ENCODE measurements at regions of chrX and their contacts with region 1.

Region 1: GRCh38 chrX:9163214-9163681 is 129.3 kb upstream of the FAM9B start:
- DNase-seq: no peak
- H3K4me3 Mint-ChIP-seq: peak overlapping the region; percentile 8
- H3K27ac Mint-ChIP-seq: peak overlapping the region; percentile 81
- H3K4me1 Mint-ChIP-seq: peaks cover 55% of the 10 kb centered on the region
- H3K27me3 Mint-ChIP-seq: no peaks in the 10 kb centered on the region

Region 2: DNA sequence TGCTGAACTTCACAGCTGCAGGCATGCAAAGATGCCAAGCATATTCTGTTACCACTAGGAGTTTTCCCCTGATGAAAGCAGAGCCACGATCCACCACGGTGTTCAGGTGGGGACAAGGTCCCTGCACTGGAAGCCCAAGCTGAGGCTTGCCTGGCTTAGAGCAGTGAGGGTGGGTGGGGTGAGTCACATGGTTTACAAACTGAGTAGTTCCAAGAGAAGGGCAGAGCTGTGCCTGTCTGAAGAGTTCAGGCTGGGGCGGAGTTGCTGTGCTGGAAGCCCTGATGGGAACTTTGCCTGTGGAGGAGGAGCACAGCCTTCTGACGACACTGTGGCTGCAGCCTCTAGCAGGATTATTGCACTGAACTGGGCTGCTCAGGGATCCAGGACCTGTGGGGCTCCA is 174.8 kb before region 1 on chrX:
- intact Hi-C with region 1: loop called (anchors 10 kb)
- DNase-seq: no peak
- H3K4me3 Mint-ChIP-seq: no peak overlapping the region
- H3K27ac Mint-ChIP-seq: no peak overlapping the region
- H3K4me1 Mint-ChIP-seq: peaks cover 5% of the 10 kb centered on the region
- H3K27me3 Mint-ChIP-seq: no peaks in the 10 kb centered on the region

Region 3: DNA sequence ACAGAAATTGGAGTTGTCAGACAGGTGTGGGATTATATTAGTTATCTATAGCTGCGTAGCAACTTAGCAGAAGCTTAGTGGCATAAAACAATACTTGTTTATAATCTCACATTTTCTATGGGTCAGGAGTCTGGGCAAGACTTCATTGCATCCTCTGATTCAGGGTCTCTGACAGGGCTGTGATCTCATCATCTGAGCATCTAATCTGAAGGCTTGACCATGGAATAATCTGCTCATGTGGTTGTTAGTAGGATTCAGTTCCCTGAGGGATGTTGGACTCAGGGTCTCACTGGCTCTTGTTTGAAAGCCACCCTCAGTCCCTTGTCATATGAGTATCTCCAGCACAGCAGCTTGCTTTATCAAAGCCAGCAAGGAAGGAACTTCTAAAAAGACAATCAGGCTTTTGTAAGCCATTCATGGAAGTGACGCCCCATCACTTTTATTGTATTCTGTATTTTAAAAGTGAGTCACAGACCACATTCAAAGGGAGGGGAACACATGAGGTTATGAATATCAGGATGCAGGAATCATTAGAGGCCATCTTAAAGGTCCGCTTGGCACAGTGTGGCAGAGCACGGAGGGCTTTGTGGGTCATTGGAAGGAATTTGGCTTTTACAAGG is 92.1 kb before region 1 on chrX:
- intact Hi-C with region 1: no loop called
- DNase-seq: no peak
- H3K4me3 Mint-ChIP-seq: no peak overlapping the region
- H3K27ac Mint-ChIP-seq: no peak overlapping the region
- H3K4me1 Mint-ChIP-seq: peaks cover 10% of the 10 kb centered on the region
- H3K27me3 Mint-ChIP-seq: peaks cover 10% of the 10 kb centered on the region

Region 4: DNA sequence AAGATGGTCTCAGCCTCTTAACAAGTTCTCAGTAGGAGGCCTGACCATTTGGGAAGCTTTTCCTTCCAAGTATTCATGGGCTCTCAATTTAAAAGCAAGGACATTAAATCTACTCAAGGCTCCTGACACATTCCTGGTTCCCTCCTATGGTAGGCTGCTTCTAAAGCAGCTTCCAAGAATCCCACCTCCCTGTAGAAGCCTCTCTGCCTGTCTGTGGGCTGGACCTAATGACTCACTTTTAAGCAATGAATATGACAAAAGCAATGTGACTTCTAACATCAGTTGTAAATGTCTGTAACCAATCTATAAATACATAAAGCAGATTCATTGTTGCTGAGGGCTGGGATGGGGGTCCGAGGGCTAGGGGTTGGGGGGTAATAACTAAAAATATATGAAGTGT is 29.8 kb before region 1 on chrX:
- intact Hi-C with region 1: loop called (anchors 5 kb)
- DNase-seq: no peak
- H3K4me3 Mint-ChIP-seq: no peak overlapping the region
- H3K27ac Mint-ChIP-seq: no peak overlapping the region
- H3K4me1 Mint-ChIP-seq: peaks cover 12% of the 10 kb centered on the region
- H3K27me3 Mint-ChIP-seq: no peaks in the 10 kb centered on the region

Region 5: GRCh38 chrX:9258421-9259104 is 95.3 kb after region 1 on chrX:
- intact Hi-C with region 1: loop called (anchors 10 kb)
- DNase-seq: no peak
- H3K4me3 Mint-ChIP-seq: no peak overlapping the region
- H3K27ac Mint-ChIP-seq: peak overlapping the region; percentile 84
- H3K4me1 Mint-ChIP-seq: peaks cover 37% of the 10 kb centered on the region
- H3K27me3 Mint-ChIP-seq: no peaks in the 10 kb centered on the region

Measured in activated T-helper 2 cell treated with anti-CD3 and anti-CD28 coated beads, Interferon-gamma antibody, Interleukin-2, Interleukin-4, amounts not matched to agents 10 μg/mL and 5 μg/mL and 100 μg/mL, durations not matched to agents 14 hours and 24 hours and 36 hours (primary cell).